A549 (cell line): ENCODE measurements at regions of chr11 and their contacts with region 1.

Region 1: GRCh38 chr11:63738720-63739360 is 29.7 kb downstream of the ZFTA start:
- DNase-seq: peak; percentile 35 to 83
- ATAC-seq: peak; percentile 50 to 75; a peak in 4 of 6 replicates
- H3K4me3 ChIP-seq: no peak overlapping the region
- H3K27ac ChIP-seq: no peak overlapping the region
- H3K4me1 ChIP-seq: peaks cover 5% of the 10 kb centered on the region; the same call in 1 of the 3 replicates
- CTCF ChIP-seq: peak; percentile 90
- EP300 ChIP-seq: no peak
- POLR2A ChIP-seq: no peak
- RAD21 ChIP-seq: peak; percentile 71 to 81

Region 2: GRCh38 chr11:63586451-63587166 is 152.2 kb before region 1 on chr11:
- CTCF ChIA-PET with region 1: no interaction called
- POLR2A ChIA-PET with region 1: no interaction called
- DNase-seq: no peak
- ATAC-seq: no peak
- H3K4me3 ChIP-seq: no peak overlapping the region
- H3K27ac ChIP-seq: no peak overlapping the region
- H3K4me1 ChIP-seq: no peaks in the 10 kb centered on the region
- CTCF ChIP-seq: no peak
- EP300 ChIP-seq: no peak
- POLR2A ChIP-seq: no peak
- RAD21 ChIP-seq: no peak

Region 3: GRCh38 chr11:63635762-63636465 is 102.9 kb before region 1 on chr11:
- CTCF ChIA-PET with region 1: interaction called, 11 read pairs
- POLR2A ChIA-PET with region 1: no interaction called
- DNase-seq: peak; percentile 70 to 81
- ATAC-seq: peak; percentile 88
- H3K4me3 ChIP-seq: no peak overlapping the region
- H3K27ac ChIP-seq: 0 out of 6 replicates have a peak overlapping the region, but pooled peaks of 1 of the 2 experiments have one; percentile 10
- H3K4me1 ChIP-seq: peaks cover 17% of the 10 kb centered on the region
- CTCF ChIP-seq: peak; percentile 91
- EP300 ChIP-seq: no peak
- POLR2A ChIP-seq: no peak
- RAD21 ChIP-seq: peak; percentile 91 to 93

Region 4: DNA sequence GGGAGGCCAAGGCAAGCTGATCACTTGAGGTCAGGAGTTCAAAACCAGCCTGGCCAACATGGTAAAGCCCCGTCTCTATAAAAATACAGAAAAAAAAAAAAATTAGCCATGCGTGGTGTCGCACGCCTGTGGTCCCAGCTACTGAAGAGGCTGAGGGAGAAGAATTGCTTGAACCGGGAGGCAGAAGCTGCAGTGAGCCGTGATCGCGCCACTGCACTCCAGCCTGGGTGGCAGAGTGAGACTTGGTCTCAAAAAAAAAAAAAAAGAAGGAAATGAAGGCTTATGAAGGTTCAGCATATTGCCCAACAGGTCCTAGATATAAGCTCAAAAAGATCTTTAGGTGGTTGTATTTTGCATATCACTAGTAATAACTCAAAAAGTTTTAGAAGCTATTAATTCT is 77.9 kb before region 1 on chr11:
- CTCF ChIA-PET with region 1: interaction called, 11 read pairs
- POLR2A ChIA-PET with region 1: no interaction called
- DNase-seq: no peak
- ATAC-seq: no peak
- H3K4me3 ChIP-seq: no peak overlapping the region
- H3K27ac ChIP-seq: no peak overlapping the region
- H3K4me1 ChIP-seq: peaks cover 20% of the 10 kb centered on the region
- CTCF ChIP-seq: no peak
- EP300 ChIP-seq: no peak
- POLR2A ChIP-seq: no peak
- RAD21 ChIP-seq: no peak

Region 5: GRCh38 chr11:63671322-63672155 is 67.3 kb before region 1 on chr11 and contains the start of gene ATL3:
- CTCF ChIA-PET with region 1: interaction called, 19 read pairs
- POLR2A ChIA-PET with region 1: interaction called, 4 read pairs
- DNase-seq: peak; percentile 90 to 99
- ATAC-seq: peak; percentile 89 to 91
- H3K4me3 ChIP-seq: peak within 1 kb of the TSS; percentile 73
- H3K27ac ChIP-seq: peak within 1 kb of the TSS; percentile 96
- H3K4me1 ChIP-seq: peaks cover 55% of the 10 kb centered on the region
- CTCF ChIP-seq: no peak
- EP300 ChIP-seq: no peak
- POLR2A ChIP-seq: peak; percentile 61
- RAD21 ChIP-seq: no peak
- polyA plus RNA-seq, gene ATL3: 45.4 and 50.8 TPM in 2 replicates

Region 6: DNA sequence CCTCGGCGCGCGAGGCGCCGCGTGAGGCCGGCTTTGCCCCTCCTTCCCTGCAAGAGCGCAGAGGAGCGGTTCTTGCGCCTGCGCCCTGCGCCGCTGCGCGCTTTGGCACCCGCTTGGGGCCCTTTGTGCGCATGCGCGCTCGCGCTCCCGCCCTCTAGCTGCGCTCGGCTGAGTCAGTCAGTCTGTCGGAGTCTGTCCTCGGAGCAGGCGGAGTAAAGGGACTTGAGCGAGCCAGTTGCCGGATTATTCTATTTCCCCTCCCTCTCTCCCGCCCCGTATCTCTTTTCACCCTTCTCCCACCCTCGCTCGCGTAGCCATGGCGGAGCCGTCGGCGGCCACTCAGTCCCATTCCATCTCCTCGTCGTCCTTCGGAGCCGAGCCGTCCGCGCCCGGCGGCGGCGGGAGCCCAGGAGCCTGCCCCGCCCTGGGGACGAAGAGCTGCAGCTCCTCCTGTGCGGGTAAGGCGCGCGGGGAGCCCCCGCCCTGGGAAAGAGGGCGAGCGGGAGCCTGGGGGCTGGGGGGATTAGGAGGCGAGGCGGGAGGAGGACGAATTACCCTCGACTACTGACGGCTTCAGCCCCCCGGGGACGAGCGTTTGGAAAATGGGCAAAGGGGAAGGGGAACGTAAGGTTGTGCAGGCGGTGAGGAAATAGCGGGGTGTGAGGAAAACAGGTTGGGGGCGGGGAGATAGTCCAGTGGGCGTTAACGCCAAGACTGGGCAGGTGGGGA is 57.4 kb before region 1 on chr11 and contains the start of gene RTN3:
- CTCF ChIA-PET with region 1: interaction called, 13 read pairs
- POLR2A ChIA-PET with region 1: interaction called, 4 read pairs
- DNase-seq: peak; percentile 94 to 99
- ATAC-seq: peak; percentile 89 to 95
- H3K4me3 ChIP-seq: peak within 1 kb of the TSS; percentile 82
- H3K27ac ChIP-seq: peak within 1 kb of the TSS; percentile 90 to 95
- H3K4me1 ChIP-seq: peaks cover 25% of the 10 kb centered on the region
- CTCF ChIP-seq: no peak
- EP300 ChIP-seq: no peak
- POLR2A ChIP-seq: peak; percentile 89
- RAD21 ChIP-seq: peak in 1 of 2 experiments; percentile 10; a peak in 1 of 5 replicates
- polyA plus RNA-seq, gene RTN3: 167 and 196 TPM in 2 replicates

Region 7: GRCh38 chr11:63709336-63709884 is 29.4 kb before region 1 on chr11:
- CTCF ChIA-PET with region 1: interaction called, 15 read pairs
- POLR2A ChIA-PET with region 1: no interaction called
- DNase-seq: no peak
- ATAC-seq: no peak
- H3K4me3 ChIP-seq: no peak overlapping the region
- H3K27ac ChIP-seq: no peak overlapping the region
- H3K4me1 ChIP-seq: peaks cover 9% of the 10 kb centered on the region; the same call in 2 of the 3 replicates
- CTCF ChIP-seq: no peak
- EP300 ChIP-seq: no peak
- POLR2A ChIP-seq: no peak
- RAD21 ChIP-seq: no peak

Region 8: GRCh38 chr11:63813035-63813562 is 74.3 kb after region 1 on chr11 and contains the start of gene SPINDOC:
- CTCF ChIA-PET with region 1: no interaction called
- POLR2A ChIA-PET with region 1: no interaction called
- DNase-seq: peak; percentile 60 to 89
- ATAC-seq: peak; percentile 89 to 91
- H3K4me3 ChIP-seq: peak within 1 kb of the TSS; percentile 94
- H3K27ac ChIP-seq: peak within 1 kb of the TSS; percentile 96 to 97
- H3K4me1 ChIP-seq: peaks cover 17% of the 10 kb centered on the region
- CTCF ChIP-seq: no peak
- EP300 ChIP-seq: no peak
- POLR2A ChIP-seq: peak; percentile 55
- RAD21 ChIP-seq: no peak
- polyA plus RNA-seq, gene SPINDOC: 15.6 and 17.6 TPM in 2 replicates